Mammary epithelial cell (primary cell): ENCODE measurements at regions of chr16 and their contacts with region 1.

Region 1: GRCh38 chr16:77359065-77359502 is 75.8 kb downstream of the ADAMTS18 start:
- DNase-seq: peak; percentile 89
- H3K4me3 ChIP-seq: no peak overlapping the region
- H3K27ac ChIP-seq: no peak overlapping the region
- H3K4me1 ChIP-seq: peaks cover 6% of the 10 kb centered on the region
- H3K27me3 ChIP-seq: no peaks in the 10 kb centered on the region
- CTCF ChIP-seq: no peak

Region 2: GRCh38 chr16:77273815-77274214 is 85.3 kb before region 1 on chr16:
- CTCF ChIA-PET with region 1: no interaction called
- dilution Hi-C with region 1: loop called (anchors 5 kb)
- in situ Hi-C with region 1: no loop called
- intact Hi-C with region 1: no loop called
- DNase-seq: peak; percentile 30
- H3K4me3 ChIP-seq: no peak overlapping the region
- H3K27ac ChIP-seq: no peak overlapping the region
- H3K4me1 ChIP-seq: no peaks in the 10 kb centered on the region
- H3K27me3 ChIP-seq: no peaks in the 10 kb centered on the region
- CTCF ChIP-seq: no peak

Region 3: GRCh38 chr16:77430787-77431585 is 71.9 kb after region 1 on chr16:
- CTCF ChIA-PET with region 1: no interaction called
- dilution Hi-C with region 1: no loop called
- in situ Hi-C with region 1: no loop called
- intact Hi-C with region 1: no loop called
- DNase-seq: no peak
- H3K4me3 ChIP-seq: no peak overlapping the region
- H3K27ac ChIP-seq: no peak overlapping the region
- H3K4me1 ChIP-seq: no peaks in the 10 kb centered on the region
- H3K27me3 ChIP-seq: peaks cover 11% of the 10 kb centered on the region
- CTCF ChIP-seq: no peak

Region 4: DNA sequence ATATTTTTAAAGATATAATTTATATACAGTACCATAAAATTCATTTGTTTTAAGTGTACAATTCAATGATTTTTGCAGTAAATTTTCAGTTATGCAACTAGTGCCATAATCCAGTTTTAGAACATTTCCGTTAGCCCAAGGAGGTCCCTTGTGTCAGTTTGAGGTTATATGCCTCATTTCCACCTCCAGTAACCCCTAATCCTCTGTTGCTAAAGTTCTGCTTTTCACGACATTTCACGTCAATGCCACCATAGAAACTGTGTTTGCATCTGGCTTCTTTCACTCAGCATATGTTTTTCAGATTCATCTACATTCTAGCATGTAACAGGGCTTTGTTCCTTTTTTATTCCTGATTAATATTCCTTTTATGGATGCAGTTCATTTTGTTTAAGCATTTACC is 320.8 kb after region 1 on chr16:
- CTCF ChIA-PET with region 1: no interaction called
- dilution Hi-C with region 1: no loop called
- in situ Hi-C with region 1: no loop called
- intact Hi-C with region 1: no loop called
- DNase-seq: no peak
- H3K4me3 ChIP-seq: no peak overlapping the region
- H3K27ac ChIP-seq: no peak overlapping the region
- H3K4me1 ChIP-seq: no peaks in the 10 kb centered on the region
- H3K27me3 ChIP-seq: no peaks in the 10 kb centered on the region
- CTCF ChIP-seq: no peak